Heart left ventricle (tissue), 16 donors: ENCODE measurements at regions of chr5 and their contacts with region 1.

Region 1: GRCh38 chr5:11273180-11273903 is 512.3 kb upstream of the DAP start:
- DNase-seq: no peak
- ATAC-seq: no peak
- H3K4me3 ChIP-seq: no peak overlapping the region
- H3K27ac ChIP-seq: no peak overlapping the region
- H3K4me1 ChIP-seq: no peaks in the 10 kb centered on the region
- H3K27me3 ChIP-seq: no peaks in the 10 kb centered on the region
- CTCF ChIP-seq: no peak
- POLR2A ChIP-seq: no peak

Region 2: GRCh38 chr5:11494340-11494739 is 221.0 kb after region 1 on chr5:
- intact Hi-C with region 1: loop called in 4 of 10 experiments (anchors 10 kb)
- DNase-seq: no peak
- ATAC-seq: no peak
- H3K4me3 ChIP-seq: no peak overlapping the region
- H3K27ac ChIP-seq: no peak overlapping the region
- H3K4me1 ChIP-seq: peaks cover 0 to 5% (median 0%) of the 10 kb centered on the region in 12 donors
- H3K27me3 ChIP-seq: no peaks in the 10 kb centered on the region
- CTCF ChIP-seq: peak; percentile 5 to 50 (median 28)
- POLR2A ChIP-seq: no peak

Region 3: DNA sequence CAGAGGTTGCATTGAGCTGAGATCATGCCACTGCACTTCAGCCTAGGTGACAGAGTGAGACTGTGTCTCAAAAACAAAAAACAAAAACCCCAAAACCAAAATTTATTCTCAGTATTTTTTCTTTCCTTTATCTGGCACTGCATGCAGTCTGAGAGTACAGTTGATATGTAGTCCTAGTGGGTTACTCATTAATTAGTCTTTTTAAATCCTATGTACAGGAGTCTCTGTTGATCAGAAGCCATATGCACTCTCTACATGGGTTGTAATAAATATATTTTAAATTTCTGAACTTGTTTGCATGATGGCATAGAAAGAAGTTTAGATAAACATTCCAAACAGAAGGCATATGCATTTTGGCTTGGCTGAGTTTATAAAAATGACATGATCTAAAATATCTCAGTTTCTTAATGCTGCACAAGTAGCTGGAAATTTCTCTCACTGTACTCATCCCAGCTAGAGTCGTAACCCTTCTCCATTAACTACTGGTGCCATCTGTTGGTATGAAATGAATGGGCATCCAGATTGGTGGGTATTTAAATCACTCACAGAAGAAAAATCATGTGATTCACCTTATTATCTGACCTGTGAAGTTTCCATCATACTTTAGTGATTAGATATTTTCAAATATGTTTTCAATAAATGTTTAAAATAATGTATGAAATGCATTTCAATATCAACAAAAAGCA is 346.1 kb after region 1 on chr5:
- intact Hi-C with region 1: loop called in 5 of 10 experiments (anchors 5 to 10 kb)
- DNase-seq: no peak
- ATAC-seq: peak in 3 of 4 donors; percentile 50 to 79 (median 65)
- H3K4me3 ChIP-seq: no peak overlapping the region
- H3K27ac ChIP-seq: no peak overlapping the region
- H3K4me1 ChIP-seq: peaks cover 0 to 5% (median 0%) of the 10 kb centered on the region in 12 donors
- H3K27me3 ChIP-seq: no peaks in the 10 kb centered on the region
- CTCF ChIP-seq: peak in 10 of 12 donors; percentile 13 to 54 (median 40)
- POLR2A ChIP-seq: no peak

Region 4: GRCh38 chr5:11637959-11638358 is 364.6 kb after region 1 on chr5:
- intact Hi-C with region 1: loop called in 1 of 10 experiments (anchors 5 kb)
- DNase-seq: no peak
- ATAC-seq: no peak
- H3K4me3 ChIP-seq: no peak overlapping the region
- H3K27ac ChIP-seq: no peak overlapping the region
- H3K4me1 ChIP-seq: peaks cover 0 to 9% (median 0%) of the 10 kb centered on the region in 12 donors
- H3K27me3 ChIP-seq: no peaks in the 10 kb centered on the region
- CTCF ChIP-seq: no peak
- POLR2A ChIP-seq: no peak

Region 5: DNA sequence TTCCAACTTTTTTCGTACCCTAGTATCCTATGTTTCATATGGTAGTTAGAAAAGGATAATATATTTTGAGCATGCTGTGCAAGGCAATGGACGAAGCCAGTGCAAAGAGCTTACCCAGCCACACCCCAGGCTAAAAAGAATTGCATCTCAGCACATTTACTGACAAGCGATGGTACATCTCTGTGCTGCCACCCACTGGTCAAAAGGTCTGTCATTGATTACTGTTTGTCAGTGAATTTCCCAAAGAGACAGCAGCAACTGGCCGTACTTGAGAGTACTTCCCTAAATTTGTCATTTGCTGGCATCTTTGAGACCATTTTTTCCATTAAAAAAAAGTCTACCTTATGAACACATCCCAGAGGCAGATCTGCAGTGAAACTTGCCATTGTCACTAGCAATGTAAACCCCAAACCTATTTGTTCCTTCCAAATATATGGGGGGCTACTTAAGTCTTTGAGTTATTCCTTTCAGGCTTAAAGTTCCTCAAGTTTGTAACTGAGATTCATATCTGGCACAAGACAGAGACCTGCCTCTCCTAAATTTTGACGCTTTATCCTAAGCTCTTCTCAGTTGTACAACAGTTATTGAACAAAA is 446.6 kb after region 1 on chr5:
- intact Hi-C with region 1: loop called in 2 of 10 experiments (anchors 10 kb)
- DNase-seq: peak in 4 of 5 donors; percentile 15 to 62 (median 42)
- ATAC-seq: peak in 2 of 4 donors; percentile 68 to 80
- H3K4me3 ChIP-seq: no peak overlapping the region
- H3K27ac ChIP-seq: no peak overlapping the region
- H3K4me1 ChIP-seq: no peaks in the 10 kb centered on the region
- H3K27me3 ChIP-seq: no peaks in the 10 kb centered on the region
- CTCF ChIP-seq: peak in 11 of 12 donors; percentile 14 to 51 (median 38)
- POLR2A ChIP-seq: no peak

Region 6: DNA sequence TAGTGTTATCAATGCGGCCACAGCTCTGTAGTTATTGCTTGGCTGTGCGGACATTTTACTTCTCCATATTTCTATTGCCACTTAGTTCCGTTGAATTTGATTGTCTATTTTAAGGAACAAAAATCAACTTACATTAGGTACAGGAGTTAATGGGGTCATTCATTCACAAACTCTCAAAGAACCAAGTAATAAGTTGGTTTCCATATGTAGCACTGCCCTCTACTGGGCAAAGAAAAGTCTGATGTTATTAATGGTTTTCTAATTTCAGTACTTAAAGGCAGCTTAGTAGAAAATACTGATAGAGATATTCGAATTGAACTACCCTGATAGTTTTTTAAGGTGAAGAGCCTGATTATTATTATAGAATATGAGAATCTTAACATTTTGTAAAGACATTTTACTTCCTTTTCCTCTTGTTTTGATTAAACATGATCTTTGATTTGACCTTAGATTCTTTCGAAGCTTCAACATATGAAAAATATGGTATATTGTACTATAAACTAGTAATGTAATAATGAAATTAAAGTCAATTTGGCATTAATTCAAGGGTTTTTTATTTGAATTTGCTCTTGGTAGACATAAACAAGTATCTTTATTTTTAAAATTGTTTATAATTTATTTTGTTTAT is 750.4 kb after region 1 on chr5:
- intact Hi-C with region 1: loop called in 6 of 10 experiments (anchors 5 to 10 kb)
- DNase-seq: no peak
- ATAC-seq: no peak
- H3K4me3 ChIP-seq: no peak overlapping the region
- H3K27ac ChIP-seq: no peak overlapping the region
- H3K4me1 ChIP-seq: no peaks in the 10 kb centered on the region
- H3K27me3 ChIP-seq: no peaks in the 10 kb centered on the region
- CTCF ChIP-seq: peak; percentile 35 to 68 (median 50)
- POLR2A ChIP-seq: no peak